Panc1 (cell line): ENCODE measurements at regions of chr16 and their contacts with region 1.

Region 1: DNA sequence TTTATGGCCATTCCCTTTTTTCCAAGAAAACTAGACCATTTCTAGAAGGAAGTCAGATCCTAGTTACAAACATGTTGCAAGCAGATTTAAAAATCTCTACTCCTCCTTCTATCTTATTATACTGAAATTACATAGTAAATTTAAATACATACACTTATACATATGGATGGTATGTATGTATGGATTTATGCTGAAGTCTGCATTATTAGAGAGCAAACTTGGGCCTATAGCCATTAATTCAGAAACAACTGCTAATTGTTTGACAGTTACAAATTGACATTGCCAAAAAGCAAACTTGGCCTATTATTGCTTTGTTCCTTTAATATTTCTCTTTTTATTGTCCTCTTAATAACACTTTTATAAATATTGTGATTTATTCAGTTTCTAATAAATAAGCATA is 67.1 kb downstream of the NFAT5 start:
- DNase-seq: no peak
- ATAC-seq: no peak
- H3K4me3 ChIP-seq: no peak overlapping the region
- H3K27ac ChIP-seq: no peak overlapping the region
- H3K4me1 ChIP-seq: no peaks in the 10 kb centered on the region
- H3K27me3 ChIP-seq: no peaks in the 10 kb centered on the region
- CTCF ChIP-seq: no peak

Region 2: DNA sequence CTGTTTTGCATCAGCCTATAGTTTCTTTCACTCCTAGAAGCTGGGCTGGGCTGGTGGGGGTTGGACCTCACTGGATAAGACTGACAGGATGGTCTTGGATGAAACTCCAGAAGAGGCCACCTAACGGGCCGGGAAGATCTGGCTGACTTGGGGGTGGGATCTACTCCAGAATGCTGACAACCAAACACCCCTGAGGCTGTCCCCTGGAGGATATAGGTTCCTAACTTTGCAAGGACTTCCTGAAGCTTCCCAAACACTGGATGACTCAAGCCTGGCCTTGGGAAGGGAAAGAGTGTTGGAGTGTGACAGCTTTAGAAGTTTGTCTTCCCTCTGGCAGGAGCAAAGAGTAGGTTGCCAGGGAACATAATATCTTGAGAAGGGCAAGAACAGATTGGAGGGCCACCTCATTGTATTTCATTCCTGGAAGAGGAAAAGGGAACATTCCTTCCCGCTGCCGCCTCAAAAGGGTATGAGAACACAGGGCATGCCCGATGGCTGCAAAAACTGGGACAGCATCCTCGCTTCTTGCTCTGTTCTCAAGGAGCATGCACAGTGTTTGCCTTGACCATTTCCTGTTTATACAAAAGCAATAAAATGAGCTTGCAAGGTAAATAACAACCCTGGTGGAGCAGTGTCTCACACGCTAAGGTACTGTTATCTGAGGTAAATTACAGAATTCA is 215.2 kb before region 1 on chr16:
- CTCF ChIA-PET with region 1: interaction called, 12 read pairs
- POLR2A ChIA-PET with region 1: no interaction called
- in situ Hi-C with region 1: no loop called
- intact Hi-C with region 1: no loop called
- DNase-seq: peak; percentile 85
- ATAC-seq: peak; percentile 94
- H3K4me3 ChIP-seq: peak overlapping the region; percentile 21 to 38; a peak in 3 of 4 replicates
- H3K27ac ChIP-seq: peak overlapping the region; percentile 96
- H3K4me1 ChIP-seq: peaks cover 50% of the 10 kb centered on the region
- H3K27me3 ChIP-seq: no peaks in the 10 kb centered on the region
- CTCF ChIP-seq: no peak